Activated CD4-positive, alpha-beta T cell treated with anti-CD3 and anti-CD28 coated beads for 36 hours (primary cell): ENCODE measurements at regions of chr7 and their contacts with region 1.

Region 1: DNA sequence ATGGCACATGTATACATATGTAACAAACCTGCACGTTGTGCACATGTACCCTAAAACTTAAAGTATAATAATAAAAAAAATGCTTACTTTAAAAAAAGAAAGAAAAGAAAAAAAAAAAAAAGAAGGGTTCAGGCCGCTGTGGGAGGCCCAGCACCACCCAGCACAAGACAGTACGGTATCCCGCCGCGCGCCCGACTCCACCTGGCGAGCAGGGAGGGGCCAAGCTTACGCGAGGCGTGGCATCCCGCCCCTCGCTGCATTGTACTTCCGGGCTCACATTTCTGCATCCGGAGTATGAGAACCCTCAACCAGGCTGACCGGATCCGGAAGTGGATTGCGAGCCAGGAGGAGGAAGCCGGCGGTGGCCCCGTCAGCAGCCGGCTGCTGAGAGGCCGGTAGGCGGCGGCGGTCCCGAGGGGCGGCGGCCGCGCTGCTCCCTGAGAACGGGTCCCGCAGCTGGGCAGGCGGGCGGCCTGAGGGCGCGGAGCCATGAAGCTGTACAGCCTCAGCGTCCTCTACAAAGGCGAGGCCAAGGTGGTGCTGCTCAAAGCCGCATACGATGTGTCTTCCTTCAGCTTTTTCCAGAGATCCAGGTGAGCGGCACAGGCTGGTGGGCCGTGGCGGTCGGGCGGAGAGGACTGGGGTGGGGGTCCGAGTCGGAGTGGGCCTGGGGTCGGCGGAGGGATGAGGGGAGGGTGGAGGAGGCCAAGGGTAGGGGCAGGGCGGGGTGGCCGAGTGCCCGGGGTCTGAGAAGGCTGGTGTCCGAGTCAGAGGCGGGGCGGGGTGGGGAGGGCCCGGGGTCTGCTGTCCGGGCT is at the start of gene YKT6:
- DNase-seq: peak; percentile 97
- ATAC-seq: peak; percentile 99
- H3K4me3 Mint-ChIP-seq: peak within 1 kb of the TSS; percentile 80
- H3K27ac Mint-ChIP-seq: peak within 1 kb of the TSS; percentile 75
- H3K4me1 Mint-ChIP-seq: peaks cover 26% of the 10 kb centered on the region
- H3K27me3 Mint-ChIP-seq: peaks cover 6% of the 10 kb centered on the region
- total RNA-seq, gene YKT6: 51.0 to 51.3 TPM

Region 2: GRCh38 chr7:44044315-44045225 is 156.3 kb before region 1 on chr7 and contains the start of gene DBNL:
- CTCF ChIA-PET with region 1: no interaction called
- POLR2A ChIA-PET with region 1: interaction called, 4 read pairs
- intact Hi-C with region 1: loop called in 1 of 2 experiments (anchors 1 kb)
- DNase-seq: peak; percentile 95
- ATAC-seq: peak; percentile 72
- H3K4me3 Mint-ChIP-seq: peak within 1 kb of the TSS; percentile 88
- H3K27ac Mint-ChIP-seq: peak within 1 kb of the TSS; percentile 93
- H3K4me1 Mint-ChIP-seq: peaks cover 52% of the 10 kb centered on the region
- H3K27me3 Mint-ChIP-seq: no peaks in the 10 kb centered on the region
- total RNA-seq, gene DBNL: 106 to 117 TPM

Region 3: GRCh38 chr7:44145969-44146911 is 54.6 kb before region 1 on chr7:
- CTCF ChIA-PET with region 1: interaction called, 3 read pairs
- POLR2A ChIA-PET with region 1: no interaction called
- intact Hi-C with region 1: loop called in 1 of 2 experiments (anchors 1 kb)
- DNase-seq: peak; percentile 86
- ATAC-seq: peak; percentile 91
- H3K4me3 Mint-ChIP-seq: peak overlapping the region; percentile 64
- H3K27ac Mint-ChIP-seq: no peak overlapping the region
- H3K4me1 Mint-ChIP-seq: peaks cover 6% of the 10 kb centered on the region
- H3K27me3 Mint-ChIP-seq: peaks cover 3% of the 10 kb centered on the region

Region 4: GRCh38 chr7:44257618-44258422 is 57.0 kb after region 1 on chr7:
- CTCF ChIA-PET with region 1: no interaction called
- POLR2A ChIA-PET with region 1: no interaction called
- intact Hi-C with region 1: loop called in 1 of 2 experiments (anchors 1 kb)
- DNase-seq: peak; percentile 90
- ATAC-seq: peak; percentile 91
- H3K4me3 Mint-ChIP-seq: peak overlapping the region; percentile 30
- H3K27ac Mint-ChIP-seq: peak overlapping the region; percentile 90
- H3K4me1 Mint-ChIP-seq: peaks cover 46% of the 10 kb centered on the region
- H3K27me3 Mint-ChIP-seq: no peaks in the 10 kb centered on the region